ENCODE measurements at regions of chr2 and their contacts with region 1.

Region 1: GRCh38 chr2:170973492-170974303 is 44.6 kb downstream of the GORASP2 start:
- DNase-seq: peak; percentile 86
- H3K4me3 ChIP-seq: peak overlapping the region; percentile 55 to 62
- H3K27ac ChIP-seq: peak overlapping the region; percentile 61 to 71
- H3K4me1 ChIP-seq: no peaks in the 10 kb centered on the region
- H3K27me3 ChIP-seq: no peaks in the 10 kb centered on the region
- CTCF ChIP-seq: peak; percentile 96 to 98 (median 98)
- POLR2A ChIP-seq: no peak

Region 2: DNA sequence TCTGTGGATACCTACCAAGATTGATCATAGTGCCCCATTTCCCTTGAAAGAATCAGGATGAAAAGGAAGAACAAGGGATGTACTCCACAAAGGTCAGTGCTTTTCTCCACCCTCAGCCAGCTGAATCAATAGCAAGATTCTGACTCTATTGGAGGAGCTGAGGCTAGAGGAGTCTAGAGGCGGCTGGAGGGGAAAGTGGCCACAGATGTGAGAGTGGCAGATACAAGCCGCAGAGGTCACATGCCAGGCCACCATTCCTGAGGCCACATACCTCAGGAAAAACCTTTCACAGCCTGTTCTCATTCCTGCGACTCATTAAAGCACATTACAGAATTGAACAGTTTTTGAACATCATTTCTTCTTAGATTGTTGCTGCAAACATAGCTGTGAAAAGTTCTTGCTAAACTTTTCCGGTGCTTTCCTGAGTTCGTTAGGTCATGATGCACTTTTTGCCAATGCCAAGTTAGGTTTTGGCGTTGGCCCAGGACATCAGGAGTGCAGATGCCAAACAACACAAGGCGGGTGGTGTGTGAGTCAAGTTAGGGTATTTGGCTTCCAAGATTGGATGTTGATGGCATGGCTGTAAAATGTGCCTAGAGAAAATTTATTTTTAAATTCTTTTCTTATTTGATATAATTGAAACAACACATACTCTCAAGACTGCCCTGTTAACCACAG is 419.3 kb before region 1 on chr2:
- intact Hi-C with region 1: no loop called
- DNase-seq: peak; percentile 54
- H3K4me3 ChIP-seq: no peak overlapping the region
- H3K27ac ChIP-seq: peak overlapping the region; percentile 16 to 48
- H3K4me1 ChIP-seq: no peaks in the 10 kb centered on the region
- H3K27me3 ChIP-seq: no peaks in the 10 kb centered on the region
- CTCF ChIP-seq: no peak
- POLR2A ChIP-seq: no peak

Region 3: GRCh38 chr2:171042253-171042969 is 68.7 kb after region 1 on chr2:
- intact Hi-C with region 1: no loop called
- DNase-seq: no peak
- H3K4me3 ChIP-seq: no peak overlapping the region
- H3K27ac ChIP-seq: no peak overlapping the region
- H3K4me1 ChIP-seq: no peaks in the 10 kb centered on the region
- H3K27me3 ChIP-seq: no peaks in the 10 kb centered on the region
- CTCF ChIP-seq: no peak
- POLR2A ChIP-seq: no peak

Region 4: DNA sequence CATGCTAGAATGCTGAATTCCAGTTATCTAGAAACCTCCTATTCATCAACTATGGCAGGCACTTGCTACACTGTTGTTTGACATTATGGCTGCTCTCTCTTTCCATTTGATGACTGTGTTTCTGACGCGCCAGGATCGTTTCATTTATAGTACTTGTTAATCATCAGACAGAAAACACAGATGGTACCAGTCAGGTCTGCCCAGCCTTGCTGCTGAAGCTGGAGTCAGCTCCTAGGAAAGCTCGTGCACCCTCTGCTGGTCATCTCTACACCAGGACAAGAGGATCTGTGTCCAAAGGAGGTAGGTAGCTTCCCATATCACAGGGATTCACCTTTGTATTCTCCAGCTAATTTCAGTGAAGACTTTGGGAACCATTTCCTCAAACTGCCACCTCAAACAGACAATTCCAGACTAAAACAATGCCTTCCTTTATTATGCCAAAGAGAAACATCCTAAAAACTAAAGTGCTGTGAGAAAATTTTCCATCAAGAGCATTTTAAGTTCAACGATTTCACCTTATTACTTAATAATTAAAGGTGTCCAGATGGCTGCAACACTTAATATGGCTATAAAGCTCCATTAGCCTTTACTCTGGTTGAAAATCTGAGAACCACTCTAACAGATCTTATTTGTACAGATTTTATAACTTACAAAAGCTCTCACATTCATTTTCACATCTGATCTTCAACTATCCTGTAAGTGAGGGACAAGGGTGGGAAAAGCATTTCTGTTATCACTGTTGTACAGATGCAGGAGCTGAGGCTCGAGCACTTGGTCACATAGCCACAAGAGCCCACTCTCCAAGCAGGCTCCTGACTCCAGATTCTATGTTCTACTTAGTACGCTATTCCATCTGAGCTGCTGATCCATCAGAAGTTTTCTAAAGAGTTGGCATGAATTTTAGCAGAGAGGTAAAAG is 442.6 kb after region 1 on chr2:
- intact Hi-C with region 1: loop called (anchors 2 kb)
- DNase-seq: peak; percentile 94
- H3K4me3 ChIP-seq: no peak overlapping the region
- H3K27ac ChIP-seq: peak overlapping the region; percentile 17 to 59
- H3K4me1 ChIP-seq: no peaks in the 10 kb centered on the region
- H3K27me3 ChIP-seq: no peaks in the 10 kb centered on the region
- CTCF ChIP-seq: peak; percentile 66 to 91 (median 90)
- POLR2A ChIP-seq: no peak

Region 5: GRCh38 chr2:171433763-171434670 is 460.3 kb after region 1 on chr2 and contains the starts of genes DCAF17 and METTL8:
- intact Hi-C with region 1: loop called (anchors 5 kb)
- DNase-seq: peak; percentile 95
- H3K4me3 ChIP-seq: peak within 1 kb of the TSS; percentile 72 to 84
- H3K27ac ChIP-seq: peak within 1 kb of the TSS; percentile 92 to 94
- H3K4me1 ChIP-seq: no peaks in the 10 kb centered on the region
- H3K27me3 ChIP-seq: no peaks in the 10 kb centered on the region
- CTCF ChIP-seq: peak in 2 of 4 experiments; percentile 52
- POLR2A ChIP-seq: no peak
- total RNA-seq, gene DCAF17: 15.5 to 19.1 TPM
- total RNA-seq, gene METTL8: 8.1 to 18.0 TPM

Region 6: DNA sequence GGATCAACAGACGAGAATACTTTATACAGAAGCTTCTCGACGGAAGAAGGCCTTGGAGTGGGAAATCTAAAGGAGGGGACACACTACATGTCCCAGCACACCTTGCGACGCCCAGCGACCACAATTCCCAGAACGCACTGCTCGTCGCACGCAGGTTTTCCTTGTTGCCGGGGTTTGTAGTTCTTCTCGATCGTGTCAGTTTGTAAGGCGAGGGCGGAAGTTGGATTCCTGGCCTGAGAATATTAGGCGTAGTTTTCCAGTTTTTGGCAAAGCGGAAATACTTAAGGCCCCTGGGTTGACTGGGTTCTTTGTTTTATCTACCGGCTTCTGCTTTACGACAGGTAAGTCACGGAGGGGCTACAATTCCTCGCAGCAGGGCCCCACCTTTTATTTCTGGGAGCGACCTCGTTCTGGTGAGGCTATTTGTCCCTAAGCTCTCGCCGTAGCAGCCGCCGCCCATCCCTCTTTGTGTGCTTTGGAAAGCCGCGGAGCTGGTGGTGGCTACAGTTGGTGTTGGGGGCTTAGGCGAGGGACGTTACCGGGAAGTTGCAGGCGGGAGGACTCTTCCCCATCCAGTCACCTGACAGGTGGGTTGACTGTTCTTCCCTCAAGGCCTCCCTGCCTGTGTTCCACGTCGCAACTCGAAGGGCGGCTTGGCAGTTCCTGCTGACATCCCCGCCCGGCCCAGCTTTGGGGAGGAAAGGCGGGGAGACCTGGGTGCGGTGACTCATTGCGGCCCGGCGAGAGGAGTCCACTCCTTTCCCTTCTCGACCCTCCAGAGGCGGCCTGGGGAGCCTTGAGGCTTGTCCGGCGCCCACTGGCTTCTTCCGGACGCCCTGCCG is 713.8 kb after region 1 on chr2 and contains the start of gene DYNC1I2:
- intact Hi-C with region 1: loop called (anchors 5 kb)
- DNase-seq: peak; percentile 93
- H3K4me3 ChIP-seq: peak within 1 kb of the TSS; percentile 81 to 93
- H3K27ac ChIP-seq: peak within 1 kb of the TSS; percentile 87 to 92
- H3K4me1 ChIP-seq: peaks cover 7% of the 10 kb centered on the region
- H3K27me3 ChIP-seq: no peaks in the 10 kb centered on the region
- CTCF ChIP-seq: no peak
- POLR2A ChIP-seq: no peak
- total RNA-seq, gene DYNC1I2: 70.7 to 82.1 TPM

Measured in prostate gland (tissue), 2 donors.